ENCODE measurements at regions of chr19 and their contacts with region 1.

Region 1: GRCh38 chr19:17470068-17470841 is at the start of gene SLC27A1:
- DNase-seq: peak; percentile 78 to 96
- ATAC-seq: peak; percentile 91 to 94
- H3K4me3 ChIP-seq: peak within 1 kb of the TSS; percentile 74
- H3K27ac ChIP-seq: peak within 1 kb of the TSS; percentile 84 to 93
- H3K4me1 ChIP-seq: peaks cover 28% of the 10 kb centered on the region; the same call in 2 of the 3 replicates
- CTCF ChIP-seq: no peak
- EP300 ChIP-seq: no peak
- POLR2A ChIP-seq: no peak
- RAD21 ChIP-seq: no peak
- polyA plus RNA-seq, gene SLC27A1: 1.8 and 2.7 TPM in 2 replicates

Region 2: GRCh38 chr19:17448131-17448967 is 21.9 kb before region 1 on chr19 and contains the start of gene TMEM221:
- CTCF ChIA-PET with region 1: interaction called, 13 read pairs
- POLR2A ChIA-PET with region 1: no interaction called
- DNase-seq: peak; percentile 55 to 66
- ATAC-seq: peak; percentile 78 to 88
- H3K4me3 ChIP-seq: peak within 1 kb of the TSS; percentile 50
- H3K27ac ChIP-seq: peak within 1 kb of the TSS; percentile 58 to 85
- H3K4me1 ChIP-seq: 0 out of 3 replicates have a peak, but pooled peaks cover 6% of the 10 kb centered on the region
- CTCF ChIP-seq: peak; percentile 47
- EP300 ChIP-seq: no peak
- POLR2A ChIP-seq: 0 out of 2 replicates have a peak, but pooled peaks have one; percentile 8
- RAD21 ChIP-seq: no peak
- polyA plus RNA-seq, gene TMEM221: 0.61 and 0.78 TPM in 2 replicates

Region 3: GRCh38 chr19:17455308-17456123 is 14.7 kb before region 1 on chr19:
- CTCF ChIA-PET with region 1: interaction called, 13 read pairs
- POLR2A ChIA-PET with region 1: no interaction called
- DNase-seq: no peak
- ATAC-seq: peak; percentile 17 to 44; a peak in 4 of 6 replicates
- H3K4me3 ChIP-seq: no peak overlapping the region
- H3K27ac ChIP-seq: peak overlapping the region in 1 of 2 experiments; percentile 49; a peak in 2 of 6 replicates
- H3K4me1 ChIP-seq: 0 out of 3 replicates have a peak, but pooled peaks cover 4% of the 10 kb centered on the region
- CTCF ChIP-seq: no peak
- EP300 ChIP-seq: no peak
- POLR2A ChIP-seq: no peak
- RAD21 ChIP-seq: no peak

Region 4: GRCh38 chr19:17511724-17512573 is 41.7 kb after region 1 on chr19:
- CTCF ChIA-PET with region 1: interaction called, 11 read pairs
- POLR2A ChIA-PET with region 1: no interaction called
- DNase-seq: peak; percentile 47 to 86
- ATAC-seq: peak; percentile 79 to 81
- H3K4me3 ChIP-seq: peak overlapping the region; percentile 100
- H3K27ac ChIP-seq: peak overlapping the region; percentile 100
- H3K4me1 ChIP-seq: peaks cover 13% of the 10 kb centered on the region
- CTCF ChIP-seq: 0 out of 3 replicates have a peak, but pooled peaks have one; percentile 5
- EP300 ChIP-seq: no peak
- POLR2A ChIP-seq: peak; percentile 19; the same call in 1 of the 2 replicates
- RAD21 ChIP-seq: no peak

Measured in A549 (cell line).